MCF 10A (cell line): ENCODE measurements at regions of chr9 and their contacts with region 1.

Region 1: GRCh38 chr9:116737152-116737546 is 50.0 kb downstream of the TRIM32 start:
- DNase-seq: peak; percentile 85
- H3K4me3 Mint-ChIP-seq: peak overlapping the region; percentile 2
- H3K27ac Mint-ChIP-seq: peak overlapping the region; percentile 0
- H3K4me1 Mint-ChIP-seq: peaks cover 9% of the 10 kb centered on the region
- H3K27me3 Mint-ChIP-seq: no peaks in the 10 kb centered on the region
- CTCF ChIP-seq: peak; percentile 96

Region 2: DNA sequence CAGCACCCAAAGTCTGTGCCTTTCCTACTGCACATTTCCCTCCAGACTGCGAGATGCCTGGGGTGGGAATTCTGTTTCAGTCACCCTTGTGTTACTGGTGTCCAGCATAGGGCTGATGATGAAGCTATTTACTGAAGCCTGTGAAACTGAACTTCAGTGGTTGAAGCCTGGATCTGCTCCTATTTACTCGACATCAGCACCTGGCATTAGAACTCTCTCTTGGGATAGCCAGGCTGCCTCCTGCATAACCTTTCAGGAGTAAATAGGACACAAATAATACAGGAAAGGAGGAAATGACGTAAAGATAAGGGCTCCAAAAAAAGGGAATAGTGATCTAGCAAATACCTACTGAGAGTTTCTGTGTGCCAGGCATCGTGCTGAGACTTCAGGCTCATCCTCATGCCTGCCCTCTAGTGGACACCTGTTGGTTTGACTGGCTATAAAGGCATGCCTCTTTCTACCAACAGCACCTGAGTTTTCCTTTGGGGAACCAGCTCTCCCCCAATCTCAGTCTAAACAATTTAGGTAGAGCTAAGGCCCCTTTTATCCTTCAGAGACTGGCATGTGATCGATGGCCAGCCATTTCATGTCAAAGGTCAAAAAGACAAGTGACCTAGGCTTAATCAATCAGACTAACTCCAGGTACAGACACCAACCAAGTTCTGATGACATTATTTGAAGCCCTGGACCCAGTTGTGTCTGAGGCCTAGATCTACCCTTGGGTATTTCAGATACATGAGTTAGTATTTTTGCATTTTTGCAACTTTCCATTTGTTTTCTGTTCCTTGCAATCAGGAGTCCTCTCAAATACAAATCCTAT is 242.1 kb before region 1 on chr9:
- CTCF ChIA-PET with region 1: no interaction called
- POLR2A ChIA-PET with region 1: no interaction called
- intact Hi-C with region 1: no loop called
- DNase-seq: peak; percentile 61
- H3K4me3 Mint-ChIP-seq: no peak overlapping the region
- H3K27ac Mint-ChIP-seq: no peak overlapping the region
- H3K4me1 Mint-ChIP-seq: peaks cover 5% of the 10 kb centered on the region
- H3K27me3 Mint-ChIP-seq: no peaks in the 10 kb centered on the region
- CTCF ChIP-seq: peak; percentile 61

Region 3: GRCh38 chr9:116594547-116594946 is 142.6 kb before region 1 on chr9:
- CTCF ChIA-PET with region 1: no interaction called
- POLR2A ChIA-PET with region 1: no interaction called
- intact Hi-C with region 1: no loop called
- DNase-seq: peak; percentile 44
- H3K4me3 Mint-ChIP-seq: no peak overlapping the region
- H3K27ac Mint-ChIP-seq: no peak overlapping the region
- H3K4me1 Mint-ChIP-seq: peaks cover 7% of the 10 kb centered on the region
- H3K27me3 Mint-ChIP-seq: no peaks in the 10 kb centered on the region
- CTCF ChIP-seq: no peak

Region 4: GRCh38 chr9:116717150-116717549 is 20.0 kb before region 1 on chr9:
- CTCF ChIA-PET with region 1: interaction called, 10 read pairs
- POLR2A ChIA-PET with region 1: no interaction called
- intact Hi-C with region 1: no loop called
- DNase-seq: no peak
- H3K4me3 Mint-ChIP-seq: no peak overlapping the region
- H3K27ac Mint-ChIP-seq: no peak overlapping the region
- H3K4me1 Mint-ChIP-seq: no peaks in the 10 kb centered on the region
- H3K27me3 Mint-ChIP-seq: peaks cover 12% of the 10 kb centered on the region
- CTCF ChIP-seq: no peak

Region 5: GRCh38 chr9:116749176-116749575 is 12.0 kb after region 1 on chr9:
- CTCF ChIA-PET with region 1: interaction called, 13 read pairs
- POLR2A ChIA-PET with region 1: interaction called, 3 read pairs
- intact Hi-C with region 1: no loop called
- DNase-seq: no peak
- H3K4me3 Mint-ChIP-seq: no peak overlapping the region
- H3K27ac Mint-ChIP-seq: no peak overlapping the region
- H3K4me1 Mint-ChIP-seq: peaks cover 9% of the 10 kb centered on the region
- H3K27me3 Mint-ChIP-seq: no peaks in the 10 kb centered on the region
- CTCF ChIP-seq: no peak

Region 6: DNA sequence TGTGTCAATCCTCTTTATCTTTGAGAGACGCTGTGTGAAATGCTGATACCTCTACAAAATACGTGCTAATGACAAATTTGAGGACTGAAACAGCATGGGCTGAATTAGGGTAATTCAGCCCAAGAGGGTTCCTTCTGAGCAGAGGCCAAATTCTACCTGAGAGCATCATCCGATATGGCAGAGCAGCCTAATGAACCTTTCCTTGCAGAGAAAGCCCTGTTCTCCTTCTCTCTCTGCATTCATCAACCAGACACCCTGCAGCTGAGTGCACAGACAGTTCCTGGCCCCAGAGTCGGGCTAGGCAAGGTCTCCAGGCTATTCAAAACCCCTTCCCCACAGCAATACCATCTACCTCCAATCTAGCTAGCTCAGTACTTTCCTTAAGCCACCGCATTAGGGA is 27.9 kb after region 1 on chr9:
- CTCF ChIA-PET with region 1: interaction called, 12 read pairs
- POLR2A ChIA-PET with region 1: no interaction called
- intact Hi-C with region 1: no loop called
- DNase-seq: no peak
- H3K4me3 Mint-ChIP-seq: no peak overlapping the region
- H3K27ac Mint-ChIP-seq: no peak overlapping the region
- H3K4me1 Mint-ChIP-seq: no peaks in the 10 kb centered on the region
- H3K27me3 Mint-ChIP-seq: no peaks in the 10 kb centered on the region
- CTCF ChIP-seq: no peak

Region 7: GRCh38 chr9:116812231-116813030 is 75.3 kb after region 1 on chr9:
- CTCF ChIA-PET with region 1: interaction called, 16 read pairs
- POLR2A ChIA-PET with region 1: no interaction called
- intact Hi-C with region 1: no loop called
- DNase-seq: no peak
- H3K4me3 Mint-ChIP-seq: no peak overlapping the region
- H3K27ac Mint-ChIP-seq: no peak overlapping the region
- H3K4me1 Mint-ChIP-seq: peaks cover 9% of the 10 kb centered on the region
- H3K27me3 Mint-ChIP-seq: no peaks in the 10 kb centered on the region
- CTCF ChIP-seq: no peak

Region 8: GRCh38 chr9:116860509-116861120 is 123.5 kb after region 1 on chr9:
- CTCF ChIA-PET with region 1: interaction called, 483 read pairs
- POLR2A ChIA-PET with region 1: interaction called, 47 read pairs
- intact Hi-C with region 1: loop called (anchors 1 kb)
- DNase-seq: peak; percentile 86
- H3K4me3 Mint-ChIP-seq: no peak overlapping the region
- H3K27ac Mint-ChIP-seq: peak overlapping the region; percentile 85
- H3K4me1 Mint-ChIP-seq: peaks cover 26% of the 10 kb centered on the region
- H3K27me3 Mint-ChIP-seq: no peaks in the 10 kb centered on the region
- CTCF ChIP-seq: peak; percentile 80

Region 9: DNA sequence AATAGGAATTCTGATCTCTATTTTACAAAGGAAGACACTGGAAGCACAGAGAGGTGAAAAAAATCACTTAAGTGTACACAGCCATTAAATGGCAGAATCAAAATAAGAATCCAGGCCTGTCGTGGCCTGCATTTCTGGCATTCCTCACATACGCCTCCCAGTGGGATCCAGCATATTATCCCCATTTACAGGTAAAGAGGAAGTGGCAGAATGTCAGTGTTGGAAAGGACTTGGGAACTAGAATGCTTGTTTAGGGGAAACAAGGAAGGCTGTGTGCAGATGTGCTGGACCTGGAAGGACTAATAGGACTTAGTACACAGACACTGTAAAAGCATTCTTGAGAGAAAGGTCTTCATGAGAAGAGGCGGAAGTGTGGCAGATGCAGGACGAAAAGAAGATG is 191.7 kb after region 1 on chr9:
- CTCF ChIA-PET with region 1: interaction called, 6 read pairs
- POLR2A ChIA-PET with region 1: no interaction called
- intact Hi-C with region 1: loop called (anchors 1 kb)
- DNase-seq: peak; percentile 33
- H3K4me3 Mint-ChIP-seq: no peak overlapping the region
- H3K27ac Mint-ChIP-seq: no peak overlapping the region
- H3K4me1 Mint-ChIP-seq: peaks cover 17% of the 10 kb centered on the region
- H3K27me3 Mint-ChIP-seq: no peaks in the 10 kb centered on the region
- CTCF ChIP-seq: no peak

Region 10: GRCh38 chr9:116944714-116945534 is 207.8 kb after region 1 on chr9:
- CTCF ChIA-PET with region 1: no interaction called
- POLR2A ChIA-PET with region 1: no interaction called
- intact Hi-C with region 1: no loop called
- DNase-seq: no peak
- H3K4me3 Mint-ChIP-seq: no peak overlapping the region
- H3K27ac Mint-ChIP-seq: no peak overlapping the region
- H3K4me1 Mint-ChIP-seq: no peaks in the 10 kb centered on the region
- H3K27me3 Mint-ChIP-seq: no peaks in the 10 kb centered on the region
- CTCF ChIP-seq: no peak

Region 11: GRCh38 chr9:117002686-117003085 is 265.5 kb after region 1 on chr9:
- CTCF ChIA-PET with region 1: no interaction called
- POLR2A ChIA-PET with region 1: no interaction called
- intact Hi-C with region 1: no loop called
- DNase-seq: no peak
- H3K4me3 Mint-ChIP-seq: no peak overlapping the region
- H3K27ac Mint-ChIP-seq: no peak overlapping the region
- H3K4me1 Mint-ChIP-seq: no peaks in the 10 kb centered on the region
- H3K27me3 Mint-ChIP-seq: no peaks in the 10 kb centered on the region
- CTCF ChIP-seq: no peak